ENCODE measurements at regions of chr7 and their contacts with region 1.

Region 1: DNA sequence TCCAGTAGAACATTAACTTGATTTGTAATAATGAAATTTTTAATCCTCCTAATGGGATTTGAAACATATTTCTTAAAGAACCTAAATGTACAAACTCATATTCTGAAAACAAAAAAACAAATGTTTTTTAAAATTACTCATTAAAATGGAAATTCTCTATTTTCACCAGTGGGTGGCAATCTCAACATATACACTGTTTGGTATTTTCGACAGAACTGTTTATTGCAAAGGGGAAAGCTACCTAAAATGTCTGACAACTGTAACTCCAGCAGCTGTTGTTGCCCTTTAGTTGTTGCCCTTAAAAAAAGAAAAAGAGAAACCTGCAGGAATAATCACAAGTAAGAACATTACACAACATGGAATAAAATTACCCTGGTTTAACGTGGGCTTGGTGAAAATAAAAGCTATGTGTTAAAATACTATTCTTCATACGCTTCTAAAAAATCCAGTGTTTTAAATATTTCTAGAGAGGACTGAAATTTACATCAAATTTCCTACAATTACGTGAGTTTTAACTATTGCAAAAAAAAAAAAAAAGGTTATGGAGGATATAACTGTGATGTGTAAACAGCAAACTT is 54.5 kb downstream of the COL1A2 start:
- H3K4me3 Mint-ChIP-seq: no peak overlapping the region
- H3K27ac Mint-ChIP-seq: no peak overlapping the region
- H3K4me1 Mint-ChIP-seq: peaks cover 6% of the 10 kb centered on the region
- H3K27me3 Mint-ChIP-seq: no peaks in the 10 kb centered on the region

Region 2: GRCh38 chr7:95246831-95247370 is 797.7 kb after region 1 on chr7:
- intact Hi-C with region 1: loop called (anchors 2 kb)
- H3K4me3 Mint-ChIP-seq: no peak overlapping the region
- H3K27ac Mint-ChIP-seq: no peak overlapping the region
- H3K4me1 Mint-ChIP-seq: no peaks in the 10 kb centered on the region
- H3K27me3 Mint-ChIP-seq: no peaks in the 10 kb centered on the region